PC-9 (cell line): ENCODE measurements at regions of chr9 and their contacts with region 1.

Region 1: GRCh38 chr9:98315551-98316060 is 60.2 kb upstream of the TBC1D2 start:
- DNase-seq: peak; percentile 68 to 89
- H3K4me3 ChIP-seq: no peak overlapping the region
- H3K27ac ChIP-seq: no peak overlapping the region
- H3K4me1 ChIP-seq: peaks cover 16% of the 10 kb centered on the region
- H3K27me3 ChIP-seq: no peaks in the 10 kb centered on the region
- CTCF ChIP-seq: peak; percentile 98

Region 2: GRCh38 chr9:98523231-98523896 is 207.8 kb after region 1 on chr9:
- CTCF ChIA-PET with region 1: no interaction called
- POLR2A ChIA-PET with region 1: no interaction called
- intact Hi-C with region 1: loop called (anchors 1 kb)
- DNase-seq: peak in 1 of 2 experiments; percentile 16
- H3K4me3 ChIP-seq: no peak overlapping the region
- H3K27ac ChIP-seq: no peak overlapping the region
- H3K4me1 ChIP-seq: no peaks in the 10 kb centered on the region
- H3K27me3 ChIP-seq: no peaks in the 10 kb centered on the region
- CTCF ChIP-seq: peak; percentile 52; the same call in 1 of the 2 replicates

Region 3: GRCh38 chr9:98575379-98576346 is 260.1 kb after region 1 on chr9:
- CTCF ChIA-PET with region 1: no interaction called
- POLR2A ChIA-PET with region 1: no interaction called
- intact Hi-C with region 1: loop called (anchors 5 kb)
- DNase-seq: peak; percentile 90 to 94
- H3K4me3 ChIP-seq: no peak overlapping the region
- H3K27ac ChIP-seq: peak overlapping the region; percentile 85
- H3K4me1 ChIP-seq: peaks cover 22% of the 10 kb centered on the region
- H3K27me3 ChIP-seq: no peaks in the 10 kb centered on the region
- CTCF ChIP-seq: no peak

Region 4: DNA sequence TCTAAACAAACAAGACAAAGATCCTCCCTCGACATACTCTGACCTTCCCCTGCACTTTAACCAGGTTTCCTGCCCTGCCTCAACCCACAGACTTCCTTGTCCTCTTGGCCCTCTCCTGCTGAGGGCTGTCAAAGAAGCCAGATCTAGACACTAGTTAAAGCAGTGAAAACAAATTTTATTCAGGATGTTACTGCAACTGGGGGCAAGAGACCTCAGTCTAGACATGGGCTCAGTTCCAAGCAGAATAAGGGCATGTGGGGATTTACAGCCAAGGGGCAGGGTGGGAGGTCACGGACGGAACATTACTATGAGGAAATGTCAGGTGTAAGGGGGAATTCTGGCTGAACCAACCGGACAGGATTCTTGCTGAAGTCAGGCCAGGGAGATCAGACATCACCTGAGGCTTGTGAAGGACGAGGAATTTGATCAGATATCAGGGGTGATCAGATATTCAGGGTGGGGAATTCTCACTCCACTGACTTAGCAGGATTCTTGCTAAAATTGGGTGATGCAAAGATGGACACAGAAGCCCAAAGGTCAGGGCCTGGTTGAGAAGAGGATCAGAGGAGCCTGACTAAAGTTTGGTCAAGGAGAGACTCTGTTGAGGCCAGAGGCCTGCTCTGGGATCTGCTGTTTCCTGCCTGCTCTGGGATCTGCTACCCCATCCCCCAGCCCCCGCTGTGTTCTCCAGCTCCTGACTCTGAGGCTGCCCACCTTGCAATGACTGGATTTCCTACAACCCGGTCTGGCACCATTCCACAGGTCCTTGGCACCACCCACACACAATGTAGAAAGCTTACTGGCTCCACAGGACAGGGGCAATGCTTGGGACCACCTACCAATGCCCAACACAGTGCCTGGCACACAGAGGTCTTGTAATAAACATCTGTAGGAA is 371.6 kb after region 1 on chr9:
- CTCF ChIA-PET with region 1: no interaction called
- POLR2A ChIA-PET with region 1: no interaction called
- intact Hi-C with region 1: loop called (anchors 5 kb)
- DNase-seq: peak; percentile 87 to 95
- H3K4me3 ChIP-seq: no peak overlapping the region
- H3K27ac ChIP-seq: peak overlapping the region; percentile 94
- H3K4me1 ChIP-seq: peaks cover 41% of the 10 kb centered on the region
- H3K27me3 ChIP-seq: no peaks in the 10 kb centered on the region
- CTCF ChIP-seq: no peak

Region 5: DNA sequence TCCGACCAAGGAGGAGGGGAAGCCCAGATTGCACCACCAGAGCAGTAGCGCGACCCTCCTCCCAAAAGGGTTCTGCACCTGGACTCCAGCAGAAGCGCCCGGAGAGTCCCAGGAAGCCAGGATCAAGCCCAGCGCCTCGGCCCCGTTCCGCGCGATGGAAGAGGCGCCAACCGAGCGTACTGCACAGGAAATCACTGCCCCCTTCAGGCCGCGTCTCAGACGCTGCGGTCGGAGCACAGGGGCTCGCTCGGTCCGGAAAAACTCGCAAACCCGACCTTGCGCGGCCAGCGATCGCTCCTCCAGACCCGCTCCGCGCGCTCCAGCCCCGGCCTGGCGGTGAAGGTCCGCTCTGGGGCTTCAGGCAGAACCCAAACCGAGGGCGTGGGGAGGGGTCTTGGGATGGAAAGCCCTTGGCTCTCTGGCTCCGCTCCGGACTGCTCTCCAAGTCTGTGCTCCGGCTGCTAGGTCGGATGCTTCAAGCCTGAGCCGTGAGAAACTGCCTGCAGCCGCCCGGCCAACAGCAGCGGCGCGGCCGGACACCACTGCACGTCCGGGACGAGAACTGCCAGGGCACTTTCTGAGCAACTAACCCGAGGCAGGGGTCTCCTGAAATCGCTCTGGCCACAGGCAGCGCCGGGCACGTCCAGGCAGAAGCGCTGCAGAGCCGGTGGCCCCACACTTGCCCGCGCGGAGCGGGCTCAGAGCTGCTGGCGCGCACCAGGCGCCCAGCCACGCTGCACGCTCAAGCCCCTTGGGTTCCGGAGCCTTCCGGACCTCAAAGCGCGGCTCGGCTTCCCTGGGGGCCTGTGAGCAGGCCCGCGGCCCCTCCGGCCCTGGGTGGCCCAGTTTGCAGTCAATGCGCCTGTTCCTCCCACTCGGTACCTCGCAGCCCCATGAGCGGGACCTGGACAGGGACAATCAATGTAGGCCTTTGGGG is 391.8 kb after region 1 on chr9:
- CTCF ChIA-PET with region 1: interaction called, 4 read pairs
- POLR2A ChIA-PET with region 1: no interaction called
- intact Hi-C with region 1: loop called (anchors 1 kb)
- DNase-seq: peak; percentile 69 to 81
- H3K4me3 ChIP-seq: peak overlapping the region; percentile 60
- H3K27ac ChIP-seq: peak overlapping the region; percentile 46; the same call in 1 of the 2 replicates
- H3K4me1 ChIP-seq: peaks cover 6% of the 10 kb centered on the region
- H3K27me3 ChIP-seq: peaks cover 22% of the 10 kb centered on the region
- CTCF ChIP-seq: peak; percentile 70

Region 6: DNA sequence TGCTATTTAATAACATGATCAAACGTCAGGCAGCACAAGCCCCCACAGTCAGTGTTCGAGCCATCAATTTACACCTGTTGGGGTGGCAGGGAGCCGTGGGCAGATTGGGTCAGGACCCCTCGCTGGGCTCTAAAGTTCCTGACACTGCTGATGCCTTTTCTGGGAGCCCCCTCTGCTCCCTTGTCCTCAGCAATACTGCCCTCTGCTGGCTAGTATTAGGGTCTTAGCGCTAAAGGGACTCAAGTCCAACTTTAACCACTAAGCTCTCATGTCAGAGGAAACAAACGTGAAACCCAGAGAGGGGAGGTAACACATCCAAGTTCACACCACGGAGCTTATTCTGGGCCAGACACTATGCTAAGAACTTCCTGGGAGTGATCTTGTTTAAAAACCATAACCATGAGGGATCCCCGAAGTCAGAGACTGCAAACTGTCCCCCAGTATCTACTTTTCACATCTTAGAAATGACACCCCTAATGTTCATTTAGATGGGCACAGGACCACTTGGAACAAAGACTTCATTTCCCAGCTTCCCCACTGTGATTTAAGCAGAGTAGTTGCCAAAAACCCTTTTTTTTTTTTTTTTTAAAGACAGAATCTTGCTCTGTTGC is 460.3 kb after region 1 on chr9:
- CTCF ChIA-PET with region 1: no interaction called
- POLR2A ChIA-PET with region 1: no interaction called
- intact Hi-C with region 1: loop called (anchors 5 kb)
- DNase-seq: no peak
- H3K4me3 ChIP-seq: no peak overlapping the region
- H3K27ac ChIP-seq: peak overlapping the region; percentile 32; the same call in 1 of the 2 replicates
- H3K4me1 ChIP-seq: peaks cover 22% of the 10 kb centered on the region
- H3K27me3 ChIP-seq: no peaks in the 10 kb centered on the region
- CTCF ChIP-seq: peak; percentile 69

Region 7: GRCh38 chr9:98791147-98792095 is 475.8 kb after region 1 on chr9:
- CTCF ChIA-PET with region 1: no interaction called
- POLR2A ChIA-PET with region 1: no interaction called
- intact Hi-C with region 1: loop called (anchors 1 kb)
- DNase-seq: peak; percentile 92 to 96
- H3K4me3 ChIP-seq: 0 out of 2 replicates have a peak overlapping the region, but pooled peaks have one; percentile 30
- H3K27ac ChIP-seq: peak overlapping the region; percentile 70
- H3K4me1 ChIP-seq: peaks cover 59% of the 10 kb centered on the region
- H3K27me3 ChIP-seq: no peaks in the 10 kb centered on the region
- CTCF ChIP-seq: peak; percentile 100